CD4-positive, alpha-beta T cell (primary cell): ENCODE measurements at regions of chr20 and their contacts with region 1.

Region 1: DNA sequence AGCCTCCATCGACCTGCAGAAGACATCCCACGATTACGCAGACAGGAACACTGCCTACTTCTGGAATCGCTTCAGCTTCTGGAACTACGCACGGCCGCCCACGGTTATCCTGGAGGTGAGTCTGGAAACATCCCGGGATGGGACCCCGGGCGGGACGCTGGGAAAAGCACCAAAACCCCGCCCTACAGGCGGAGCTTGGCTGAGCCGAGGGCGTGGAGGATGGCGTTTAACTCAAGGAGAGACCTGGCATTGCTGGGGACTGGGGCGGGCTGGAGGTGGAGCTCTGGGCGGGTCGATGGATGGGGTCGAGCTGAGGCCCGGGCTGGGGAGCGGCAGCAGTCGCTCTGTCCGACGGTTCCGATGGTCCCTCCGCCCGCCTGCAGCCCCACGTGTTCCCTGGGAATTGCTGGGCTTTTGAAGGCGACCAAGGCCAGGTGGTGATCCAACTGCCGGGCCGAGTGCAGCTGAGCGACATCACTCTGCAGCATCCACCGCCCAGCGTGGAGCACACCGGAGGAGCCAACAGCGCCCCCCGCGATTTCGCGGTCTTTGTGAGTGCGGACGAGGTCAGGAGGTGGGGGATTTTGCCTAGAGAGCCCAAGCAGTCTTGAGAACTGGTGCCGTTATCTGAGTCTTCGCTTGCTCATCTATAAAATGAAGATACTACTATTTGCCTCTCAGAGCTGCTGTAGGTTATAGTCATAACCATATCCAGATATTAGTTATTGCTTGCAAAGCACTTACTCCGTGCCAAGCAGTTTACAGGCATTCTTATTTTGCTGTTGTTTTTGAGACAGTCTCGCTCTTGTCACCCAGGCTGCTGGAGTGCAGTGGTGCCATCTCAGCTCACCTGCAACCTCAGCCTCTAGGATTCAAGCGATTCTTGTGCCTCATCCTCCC is 3.8 kb downstream of the SPAG4 start:
- DNase-seq: peak; percentile 50 to 91 (median 68)
- ATAC-seq: peak; percentile 9
- H3K4me3 ChIP-seq: peak overlapping the region; percentile 66
- H3K4me3 Mint-ChIP-seq: peak overlapping the region; percentile 91
- H3K27ac ChIP-seq: peak overlapping the region in 1 of 2 donors; percentile 15
- H3K27ac Mint-ChIP-seq: peak overlapping the region; percentile 94
- H3K4me1 ChIP-seq: peaks cover 45% of the 10 kb centered on the region
- H3K4me1 Mint-ChIP-seq: peaks cover 39% of the 10 kb centered on the region
- H3K27me3 ChIP-seq: no peaks in the 10 kb centered on the region
- H3K27me3 Mint-ChIP-seq: no peaks in the 10 kb centered on the region
- CTCF ChIP-seq: peak; percentile 59

Region 2: DNA sequence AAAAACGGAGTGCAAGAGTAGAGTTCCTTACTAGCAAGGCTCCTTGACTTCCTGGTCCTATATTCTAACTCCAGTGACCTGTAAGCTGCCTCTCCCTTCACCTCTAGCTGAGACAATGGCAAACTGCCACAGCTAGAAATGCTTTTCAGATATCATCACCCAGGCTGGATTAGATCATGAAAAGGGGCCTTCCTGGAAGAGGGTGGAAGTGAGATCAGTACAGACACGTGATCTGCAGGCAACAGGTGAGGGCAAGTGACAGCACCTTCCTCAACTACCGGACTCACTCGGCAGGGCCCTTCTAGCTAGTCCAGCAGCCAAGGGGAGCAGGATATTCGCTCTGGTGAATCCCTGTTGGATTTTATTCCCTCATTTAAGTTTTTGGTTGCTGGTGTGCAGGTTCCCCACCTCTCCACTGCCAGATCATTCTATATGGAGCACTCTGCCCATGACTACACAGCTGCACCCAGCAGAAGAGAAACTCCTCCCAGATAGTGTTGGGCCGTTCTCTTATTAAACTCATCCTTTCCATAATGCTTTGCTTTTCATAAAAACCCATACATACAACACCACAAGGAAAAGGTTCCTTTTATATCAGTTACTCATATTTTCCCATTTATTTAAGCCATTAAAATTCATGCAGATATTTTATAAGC is 300.8 kb before region 1 on chr20:
- CTCF ChIA-PET with region 1: no interaction called
- POLR2A ChIA-PET with region 1: no interaction called
- intact Hi-C with region 1: no loop called
- DNase-seq: no peak
- ATAC-seq: no peak
- H3K4me3 ChIP-seq: no peak overlapping the region
- H3K4me3 Mint-ChIP-seq: no peak overlapping the region
- H3K27ac ChIP-seq: no peak overlapping the region
- H3K27ac Mint-ChIP-seq: no peak overlapping the region
- H3K4me1 ChIP-seq: peaks cover 6% of the 10 kb centered on the region
- H3K4me1 Mint-ChIP-seq: peaks cover 14% of the 10 kb centered on the region
- H3K27me3 ChIP-seq: no peaks in the 10 kb centered on the region
- H3K27me3 Mint-ChIP-seq: no peaks in the 10 kb centered on the region
- CTCF ChIP-seq: no peak

Region 3: DNA sequence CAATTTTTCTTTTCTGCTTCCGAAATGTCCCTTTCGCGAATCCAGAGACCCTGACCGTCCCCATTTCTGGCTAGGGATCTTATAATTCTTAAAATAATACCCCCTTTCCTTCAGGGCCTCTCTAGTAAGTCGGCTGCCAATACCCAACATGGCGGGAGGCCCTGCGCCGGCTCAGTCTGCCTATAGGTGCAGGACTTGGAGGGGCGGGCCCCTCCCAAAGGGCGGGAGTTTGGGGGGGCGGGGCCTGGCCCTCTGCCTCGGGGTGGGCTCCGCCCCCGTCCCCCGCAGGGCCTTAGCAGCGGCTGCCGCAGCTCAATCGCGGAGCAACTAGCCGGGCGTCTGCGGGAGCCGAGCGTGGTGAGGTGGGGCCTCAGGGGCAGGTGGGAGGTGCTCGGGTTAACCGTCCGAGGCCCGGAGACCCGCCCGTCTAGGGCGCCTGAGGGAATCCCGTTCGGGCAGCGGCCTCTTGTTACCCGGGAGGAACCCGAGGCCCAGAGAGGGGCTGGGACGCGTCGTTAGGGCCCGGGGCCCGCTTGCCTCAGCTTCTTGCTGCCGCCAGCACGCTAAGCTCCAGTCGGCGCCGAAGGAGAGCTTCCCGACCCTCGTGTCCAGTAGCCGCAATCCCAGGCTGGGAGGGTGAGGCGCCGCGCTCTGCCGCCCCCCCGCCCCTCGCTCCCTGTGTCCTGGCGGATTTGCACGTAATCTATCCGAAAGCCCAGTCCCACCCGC is 164.4 kb before region 1 on chr20 and contains the start of gene CEP250:
- CTCF ChIA-PET with region 1: no interaction called
- POLR2A ChIA-PET with region 1: interaction called, 9 read pairs
- intact Hi-C with region 1: loop called in 1 of 2 experiments (anchors 2 kb)
- DNase-seq: peak; percentile 87 to 97 (median 94)
- ATAC-seq: peak; percentile 96
- H3K4me3 ChIP-seq: peak within 1 kb of the TSS; percentile 91
- H3K4me3 Mint-ChIP-seq: peak within 1 kb of the TSS; percentile 97
- H3K27ac ChIP-seq: peak within 1 kb of the TSS; percentile 83 to 94
- H3K27ac Mint-ChIP-seq: peak within 1 kb of the TSS; percentile 87
- H3K4me1 ChIP-seq: peaks cover 19% of the 10 kb centered on the region
- H3K4me1 Mint-ChIP-seq: peaks cover 29% of the 10 kb centered on the region
- H3K27me3 ChIP-seq: no peaks in the 10 kb centered on the region
- H3K27me3 Mint-ChIP-seq: no peaks in the 10 kb centered on the region
- CTCF ChIP-seq: no peak
- total RNA-seq, gene CEP250: 27.6 to 33.1 TPM

Region 4: GRCh38 chr20:35541783-35542588 is 77.5 kb before region 1 on chr20 and contains the start of gene ERGIC3:
- CTCF ChIA-PET with region 1: interaction called, 7 read pairs
- POLR2A ChIA-PET with region 1: interaction called, 17 read pairs
- intact Hi-C with region 1: loop called (anchors 2 to 5 kb)
- DNase-seq: peak; percentile 95 to 99 (median 96)
- ATAC-seq: peak; percentile 99
- H3K4me3 ChIP-seq: peak within 1 kb of the TSS; percentile 75
- H3K4me3 Mint-ChIP-seq: peak within 1 kb of the TSS; percentile 97
- H3K27ac ChIP-seq: peak within 1 kb of the TSS; percentile 65 to 81
- H3K27ac Mint-ChIP-seq: peak within 1 kb of the TSS; percentile 89
- H3K4me1 ChIP-seq: peaks cover 18% of the 10 kb centered on the region
- H3K4me1 Mint-ChIP-seq: peaks cover 32% of the 10 kb centered on the region
- H3K27me3 ChIP-seq: no peaks in the 10 kb centered on the region
- H3K27me3 Mint-ChIP-seq: no peaks in the 10 kb centered on the region
- CTCF ChIP-seq: no peak
- total RNA-seq, gene ERGIC3: 144 to 146 TPM

Region 5: GRCh38 chr20:35629427-35630145 is 10.1 kb after region 1 on chr20:
- CTCF ChIA-PET with region 1: no interaction called
- POLR2A ChIA-PET with region 1: interaction called, 4 read pairs
- intact Hi-C with region 1: loop called in 1 of 2 experiments (anchors 2 kb)
- DNase-seq: no peak
- ATAC-seq: no peak
- H3K4me3 ChIP-seq: no peak overlapping the region
- H3K4me3 Mint-ChIP-seq: no peak overlapping the region
- H3K27ac ChIP-seq: no peak overlapping the region
- H3K27ac Mint-ChIP-seq: peak overlapping the region; percentile 25
- H3K4me1 ChIP-seq: no peaks in the 10 kb centered on the region
- H3K4me1 Mint-ChIP-seq: peaks cover 6% of the 10 kb centered on the region
- H3K27me3 ChIP-seq: no peaks in the 10 kb centered on the region
- H3K27me3 Mint-ChIP-seq: no peaks in the 10 kb centered on the region
- CTCF ChIP-seq: no peak

Region 6: GRCh38 chr20:35699127-35699975 is 79.9 kb after region 1 on chr20 and contains the starts of genes NFS1 and ROMO1:
- CTCF ChIA-PET with region 1: interaction called, 5 read pairs
- POLR2A ChIA-PET with region 1: interaction called, 21 read pairs
- intact Hi-C with region 1: loop called (anchors 2 to 5 kb)
- DNase-seq: peak; percentile 77 to 94 (median 82)
- ATAC-seq: peak; percentile 89
- H3K4me3 ChIP-seq: peak within 1 kb of the TSS; percentile 95
- H3K4me3 Mint-ChIP-seq: peak within 1 kb of the TSS; percentile 95
- H3K27ac ChIP-seq: peak within 1 kb of the TSS; percentile 93 to 97
- H3K27ac Mint-ChIP-seq: peak within 1 kb of the TSS; percentile 84
- H3K4me1 ChIP-seq: peaks cover 23% of the 10 kb centered on the region
- H3K4me1 Mint-ChIP-seq: peaks cover 52% of the 10 kb centered on the region
- H3K27me3 ChIP-seq: no peaks in the 10 kb centered on the region
- H3K27me3 Mint-ChIP-seq: no peaks in the 10 kb centered on the region
- CTCF ChIP-seq: peak; percentile 11
- total RNA-seq, gene NFS1: 10.6 to 11.5 TPM
- total RNA-seq, gene ROMO1: 32.9 to 35.8 TPM

Region 7: DNA sequence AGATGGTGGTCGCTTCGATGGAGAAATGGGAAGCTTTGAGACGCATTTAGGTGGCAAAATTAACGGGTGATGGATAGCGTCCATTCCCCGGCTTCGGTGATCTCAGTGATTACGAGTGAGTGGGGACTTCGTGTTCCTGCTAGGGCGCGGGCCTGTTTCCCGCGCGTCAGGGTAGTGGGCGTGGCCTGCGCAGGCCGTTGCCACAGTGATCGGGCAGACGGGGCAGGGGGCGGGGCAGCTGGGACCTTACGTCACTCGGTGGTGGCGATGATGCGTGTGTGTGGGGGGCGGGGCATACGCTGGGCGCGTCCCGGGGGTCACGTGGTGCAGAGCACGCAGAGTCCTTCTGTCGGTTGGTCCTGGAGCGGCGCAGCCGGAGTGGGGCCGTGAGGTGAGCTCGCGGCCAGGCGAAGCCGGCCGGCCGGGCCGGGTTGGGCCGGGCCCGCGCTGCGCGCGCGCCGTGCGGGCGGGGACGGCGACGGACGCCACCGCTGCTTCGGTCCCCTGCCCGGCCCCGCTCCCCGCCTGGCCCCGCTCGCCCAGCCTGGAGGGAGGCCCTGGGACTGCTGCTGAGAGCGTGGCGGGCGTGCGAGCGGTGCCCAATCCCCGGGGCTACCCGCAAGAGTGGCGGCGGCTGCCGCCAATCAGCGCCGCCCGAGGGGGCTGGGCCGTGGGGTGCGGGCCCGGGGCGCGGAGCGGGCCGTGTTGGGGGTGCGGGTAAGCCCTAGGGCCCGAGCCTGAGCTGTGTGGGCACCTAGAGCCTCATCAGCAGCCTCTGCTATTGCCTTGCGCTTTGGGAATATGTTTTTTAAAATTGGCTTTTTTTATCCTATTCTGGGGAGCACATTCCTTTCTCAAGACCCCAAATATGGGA is 152.5 kb after region 1 on chr20 and contains the start of gene PHF20:
- CTCF ChIA-PET with region 1: interaction called, 3 read pairs
- POLR2A ChIA-PET with region 1: interaction called, 8 read pairs
- intact Hi-C with region 1: loop called in 1 of 2 experiments (anchors 1 kb)
- DNase-seq: peak; percentile 100
- ATAC-seq: peak; percentile 84
- H3K4me3 ChIP-seq: peak within 1 kb of the TSS; percentile 79
- H3K4me3 Mint-ChIP-seq: peak within 1 kb of the TSS; percentile 97
- H3K27ac ChIP-seq: peak within 1 kb of the TSS; percentile 86 to 96
- H3K27ac Mint-ChIP-seq: peak within 1 kb of the TSS; percentile 96
- H3K4me1 ChIP-seq: peaks cover 84% of the 10 kb centered on the region
- H3K4me1 Mint-ChIP-seq: peaks cover 75% of the 10 kb centered on the region
- H3K27me3 ChIP-seq: no peaks in the 10 kb centered on the region
- H3K27me3 Mint-ChIP-seq: no peaks in the 10 kb centered on the region
- CTCF ChIP-seq: no peak
- total RNA-seq, gene PHF20: 119 to 126 TPM

Region 8: GRCh38 chr20:35837577-35838198 is 218.2 kb after region 1 on chr20:
- CTCF ChIA-PET with region 1: no interaction called
- POLR2A ChIA-PET with region 1: no interaction called
- intact Hi-C with region 1: no loop called
- DNase-seq: no peak
- ATAC-seq: no peak
- H3K4me3 ChIP-seq: no peak overlapping the region
- H3K4me3 Mint-ChIP-seq: no peak overlapping the region
- H3K27ac ChIP-seq: no peak overlapping the region
- H3K27ac Mint-ChIP-seq: peak overlapping the region; percentile 1
- H3K4me1 ChIP-seq: peaks cover 16% of the 10 kb centered on the region
- H3K4me1 Mint-ChIP-seq: peaks cover 66% of the 10 kb centered on the region
- H3K27me3 ChIP-seq: no peaks in the 10 kb centered on the region
- H3K27me3 Mint-ChIP-seq: no peaks in the 10 kb centered on the region
- CTCF ChIP-seq: no peak